ENCODE measurements at regions of chr1 and their contacts with region 1.

Region 1: GRCh38 chr1:226121587-226122400 is 59.3 kb downstream of the H3-3A start:
- DNase-seq: no peak
- ATAC-seq: peak; percentile 79
- H3K4me3 ChIP-seq: peak overlapping the region; percentile 81
- H3K27ac ChIP-seq: peak overlapping the region; percentile 77
- H3K4me1 ChIP-seq: peaks cover 28% of the 10 kb centered on the region
- H3K27me3 ChIP-seq: no peaks in the 10 kb centered on the region
- CTCF ChIP-seq: peak; percentile 64 to 80 (median 72); a peak in 5 of 6 replicates
- EP300 ChIP-seq: no peak
- POLR2A ChIP-seq: peak; percentile 71
- RAD21 ChIP-seq: peak; percentile 90

Region 2: DNA sequence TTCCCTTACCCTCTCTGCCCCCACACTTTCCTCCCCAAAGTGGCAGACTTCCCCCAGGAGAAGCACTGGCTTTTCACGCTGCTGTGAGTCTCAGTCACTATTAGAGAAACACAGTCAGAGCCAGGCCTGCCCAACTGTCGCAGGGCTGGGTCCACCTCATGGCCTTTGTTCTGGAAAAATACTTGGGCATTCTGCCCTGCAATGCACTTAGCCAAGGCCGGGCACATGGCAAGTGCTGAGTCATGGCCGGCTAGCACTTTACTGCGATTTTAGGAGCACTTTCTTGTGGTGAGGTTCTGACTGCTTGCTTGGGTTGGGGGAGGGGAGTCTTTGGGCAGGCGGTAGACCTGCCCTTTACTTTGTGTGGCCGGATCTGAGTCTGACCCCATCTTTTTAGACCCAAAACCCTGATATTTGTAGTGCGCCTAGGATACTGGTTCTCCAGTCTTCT is 304.2 kb before region 1 on chr1:
- CTCF ChIA-PET with region 1: no interaction called
- POLR2A ChIA-PET with region 1: no interaction called
- RAD21 ChIA-PET with region 1: no interaction called
- SMC1A ChIA-PET with region 1: no interaction called
- in situ Hi-C with region 1: no loop called
- intact Hi-C with region 1: no loop called
- DNase-seq: no peak
- ATAC-seq: no peak; the same call in 2 of the 3 replicates
- H3K4me3 ChIP-seq: no peak overlapping the region
- H3K27ac ChIP-seq: no peak overlapping the region
- H3K4me1 ChIP-seq: no peaks in the 10 kb centered on the region
- H3K27me3 ChIP-seq: no peaks in the 10 kb centered on the region
- CTCF ChIP-seq: no peak
- EP300 ChIP-seq: no peak
- POLR2A ChIP-seq: no peak
- RAD21 ChIP-seq: no peak

Region 3: DNA sequence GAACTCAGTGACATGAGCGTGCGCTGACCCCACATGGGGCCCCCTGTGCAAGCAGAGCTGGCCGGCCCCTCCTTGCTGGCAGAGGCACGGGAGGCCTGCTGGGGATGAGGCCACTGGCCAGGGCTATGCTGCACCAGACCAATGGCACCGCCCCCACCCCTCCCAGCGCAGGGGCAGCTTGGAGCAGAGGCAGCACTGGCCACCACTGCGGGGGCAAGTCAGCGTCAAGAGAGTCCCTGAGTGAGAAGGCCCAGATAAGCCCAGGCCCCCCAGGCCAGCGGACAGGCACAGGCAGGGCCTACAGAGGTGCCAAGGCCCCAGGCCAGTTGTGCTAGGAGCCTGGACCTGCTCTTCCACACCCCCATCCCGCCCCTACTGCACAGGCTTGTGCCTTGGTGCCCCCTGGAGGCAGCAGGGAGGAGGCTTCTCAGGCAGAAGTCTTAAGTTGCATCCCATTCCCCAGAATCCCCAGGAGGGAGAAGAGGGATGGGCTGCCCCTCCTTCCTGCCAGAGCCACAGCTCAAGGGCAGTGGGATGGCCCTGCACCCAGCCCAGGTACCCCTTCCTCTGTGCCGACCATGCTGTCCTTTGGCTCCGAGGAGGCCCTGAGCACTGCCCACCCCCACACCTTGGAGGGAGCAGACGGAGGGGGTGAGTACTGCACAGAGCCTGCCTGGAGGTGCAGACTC is 276.1 kb before region 1 on chr1:
- CTCF ChIA-PET with region 1: no interaction called
- POLR2A ChIA-PET with region 1: no interaction called
- RAD21 ChIA-PET with region 1: no interaction called
- SMC1A ChIA-PET with region 1: no interaction called
- in situ Hi-C with region 1: no loop called
- intact Hi-C with region 1: no loop called
- DNase-seq: no peak
- ATAC-seq: peak; percentile 36
- H3K4me3 ChIP-seq: no peak overlapping the region
- H3K27ac ChIP-seq: no peak overlapping the region
- H3K4me1 ChIP-seq: peaks cover 34% of the 10 kb centered on the region
- H3K27me3 ChIP-seq: no peaks in the 10 kb centered on the region
- CTCF ChIP-seq: peak; percentile 43 to 59 (median 47)
- EP300 ChIP-seq: no peak
- POLR2A ChIP-seq: peak; percentile 27
- RAD21 ChIP-seq: peak; percentile 68

Region 4: GRCh38 chr1:225896937-225897549 is 224.8 kb before region 1 on chr1:
- CTCF ChIA-PET with region 1: no interaction called
- POLR2A ChIA-PET with region 1: no interaction called
- RAD21 ChIA-PET with region 1: no interaction called
- SMC1A ChIA-PET with region 1: no interaction called
- in situ Hi-C with region 1: no loop called
- intact Hi-C with region 1: no loop called
- DNase-seq: peak; percentile 90
- ATAC-seq: peak; percentile 100
- H3K4me3 ChIP-seq: no peak overlapping the region
- H3K27ac ChIP-seq: peak overlapping the region; percentile 80
- H3K4me1 ChIP-seq: peaks cover 20% of the 10 kb centered on the region
- H3K27me3 ChIP-seq: no peaks in the 10 kb centered on the region
- CTCF ChIP-seq: peak in 1 of 3 experiments; percentile 11; a peak in 1 of 6 replicates
- EP300 ChIP-seq: peak; percentile 51 to 61; a peak in 3 of 4 replicates
- POLR2A ChIP-seq: peak; percentile 69
- RAD21 ChIP-seq: no peak

Region 5: DNA sequence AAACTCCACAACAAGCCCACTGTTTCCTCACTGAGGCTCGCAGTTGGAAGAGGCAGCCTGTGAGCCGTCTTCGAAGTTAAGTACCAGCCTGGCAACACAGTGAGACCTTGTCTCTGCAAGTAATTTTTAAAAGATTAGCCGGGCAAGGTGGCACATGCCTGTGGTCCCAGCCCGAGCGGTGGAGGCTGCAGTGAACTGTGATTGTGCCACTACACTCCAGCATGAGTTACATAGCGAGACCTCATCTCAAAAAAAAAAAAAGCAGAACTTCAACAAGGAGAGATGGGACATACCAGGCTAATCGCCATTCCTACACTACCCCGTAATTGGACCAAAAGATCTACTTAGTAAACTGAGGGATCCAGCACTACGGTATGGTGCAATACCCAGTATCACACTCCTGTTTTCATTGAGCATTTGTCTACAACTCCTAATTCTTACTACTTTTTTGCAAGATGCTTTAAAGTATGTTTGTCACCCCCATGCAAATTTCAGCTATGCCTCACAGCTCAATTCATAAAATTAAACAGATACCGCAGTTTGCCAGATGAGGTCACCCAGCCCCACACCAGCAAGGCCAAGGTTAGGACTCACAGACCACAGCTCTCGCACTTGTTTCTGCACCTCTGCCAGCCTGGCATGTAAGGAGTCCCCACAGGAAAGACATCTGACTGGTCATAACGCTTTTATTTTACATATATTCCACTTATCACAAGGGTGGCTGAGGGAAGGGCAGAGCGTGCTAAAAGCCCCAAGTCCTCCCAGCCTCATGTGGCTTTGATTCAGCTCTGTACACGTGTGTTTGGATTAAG is 143.7 kb before region 1 on chr1:
- CTCF ChIA-PET with region 1: interaction called, 7 read pairs
- POLR2A ChIA-PET with region 1: no interaction called
- RAD21 ChIA-PET with region 1: interaction called, 6 read pairs
- SMC1A ChIA-PET with region 1: no interaction called
- in situ Hi-C with region 1: no loop called
- intact Hi-C with region 1: loop called (anchors 5 kb)
- DNase-seq: peak; percentile 45
- ATAC-seq: peak; percentile 85
- H3K4me3 ChIP-seq: no peak overlapping the region
- H3K27ac ChIP-seq: no peak overlapping the region
- H3K4me1 ChIP-seq: 0 out of 2 replicates have a peak, but pooled peaks cover 5% of the 10 kb centered on the region
- H3K27me3 ChIP-seq: no peaks in the 10 kb centered on the region
- CTCF ChIP-seq: peak; percentile 9 to 54 (median 11); a peak in 4 of 6 replicates
- EP300 ChIP-seq: no peak
- POLR2A ChIP-seq: no peak
- RAD21 ChIP-seq: peak; percentile 51

Region 6: DNA sequence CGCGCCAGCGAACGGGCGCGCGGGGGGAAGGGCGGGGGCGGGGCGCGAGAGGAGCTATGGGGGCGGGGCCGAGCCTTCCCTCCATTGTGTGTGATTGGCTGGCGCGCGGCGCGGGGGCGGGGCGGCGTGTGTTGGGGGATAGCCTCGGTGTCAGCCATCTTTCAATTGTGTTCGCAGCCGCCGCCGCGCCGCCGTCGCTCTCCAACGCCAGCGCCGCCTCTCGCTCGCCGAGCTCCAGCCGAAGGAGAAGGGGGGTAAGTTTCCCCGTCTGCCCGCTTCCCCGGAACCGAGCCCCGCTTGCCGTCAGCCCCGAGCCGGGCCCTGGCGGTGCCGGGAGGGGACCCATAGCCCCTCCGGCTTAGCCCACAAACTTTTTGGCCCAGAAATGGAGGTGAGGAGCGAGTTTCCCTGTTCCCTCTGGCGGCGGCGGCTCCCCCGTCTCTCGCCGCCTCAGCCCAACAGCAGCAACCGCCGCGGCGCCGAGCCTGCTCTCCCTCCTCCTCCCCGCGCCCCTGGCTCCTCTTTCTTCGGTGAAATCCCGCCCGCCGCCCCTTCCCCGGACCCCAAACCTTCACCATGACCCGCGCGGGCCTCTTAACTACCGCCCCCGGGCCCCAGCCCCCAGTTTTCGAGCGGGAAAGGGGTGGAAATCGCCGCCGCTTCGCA is 59.1 kb before region 1 on chr1 and contains the start of gene H3-3A:
- CTCF ChIA-PET with region 1: interaction called, 198 read pairs
- POLR2A ChIA-PET with region 1: interaction called, 13 read pairs
- RAD21 ChIA-PET with region 1: interaction called, 58 read pairs
- SMC1A ChIA-PET with region 1: interaction called, 65 read pairs
- in situ Hi-C with region 1: no loop called
- intact Hi-C with region 1: loop called (anchors 1 kb)
- DNase-seq: peak; percentile 66
- ATAC-seq: peak; percentile 88
- H3K4me3 ChIP-seq: peak within 1 kb of the TSS; percentile 91
- H3K27ac ChIP-seq: peak within 1 kb of the TSS; percentile 97
- H3K4me1 ChIP-seq: peaks cover 8% of the 10 kb centered on the region
- H3K27me3 ChIP-seq: no peaks in the 10 kb centered on the region
- CTCF ChIP-seq: no peak
- EP300 ChIP-seq: no peak
- POLR2A ChIP-seq: peak; percentile 91
- RAD21 ChIP-seq: no peak
- polyA plus RNA-seq, gene H3-3A: 254 to 435 TPM

Region 7: GRCh38 chr1:226149806-226150205 is 28.0 kb after region 1 on chr1:
- CTCF ChIA-PET with region 1: interaction called, 32 read pairs
- POLR2A ChIA-PET with region 1: no interaction called
- RAD21 ChIA-PET with region 1: interaction called, 13 read pairs
- SMC1A ChIA-PET with region 1: interaction called, 12 read pairs
- in situ Hi-C with region 1: no loop called
- intact Hi-C with region 1: no loop called
- DNase-seq: no peak
- ATAC-seq: peak; percentile 43; the same call in 1 of the 3 replicates
- H3K4me3 ChIP-seq: no peak overlapping the region
- H3K27ac ChIP-seq: no peak overlapping the region
- H3K4me1 ChIP-seq: no peaks in the 10 kb centered on the region
- H3K27me3 ChIP-seq: no peaks in the 10 kb centered on the region
- CTCF ChIP-seq: no peak
- EP300 ChIP-seq: no peak
- POLR2A ChIP-seq: no peak
- RAD21 ChIP-seq: no peak

Region 8: DNA sequence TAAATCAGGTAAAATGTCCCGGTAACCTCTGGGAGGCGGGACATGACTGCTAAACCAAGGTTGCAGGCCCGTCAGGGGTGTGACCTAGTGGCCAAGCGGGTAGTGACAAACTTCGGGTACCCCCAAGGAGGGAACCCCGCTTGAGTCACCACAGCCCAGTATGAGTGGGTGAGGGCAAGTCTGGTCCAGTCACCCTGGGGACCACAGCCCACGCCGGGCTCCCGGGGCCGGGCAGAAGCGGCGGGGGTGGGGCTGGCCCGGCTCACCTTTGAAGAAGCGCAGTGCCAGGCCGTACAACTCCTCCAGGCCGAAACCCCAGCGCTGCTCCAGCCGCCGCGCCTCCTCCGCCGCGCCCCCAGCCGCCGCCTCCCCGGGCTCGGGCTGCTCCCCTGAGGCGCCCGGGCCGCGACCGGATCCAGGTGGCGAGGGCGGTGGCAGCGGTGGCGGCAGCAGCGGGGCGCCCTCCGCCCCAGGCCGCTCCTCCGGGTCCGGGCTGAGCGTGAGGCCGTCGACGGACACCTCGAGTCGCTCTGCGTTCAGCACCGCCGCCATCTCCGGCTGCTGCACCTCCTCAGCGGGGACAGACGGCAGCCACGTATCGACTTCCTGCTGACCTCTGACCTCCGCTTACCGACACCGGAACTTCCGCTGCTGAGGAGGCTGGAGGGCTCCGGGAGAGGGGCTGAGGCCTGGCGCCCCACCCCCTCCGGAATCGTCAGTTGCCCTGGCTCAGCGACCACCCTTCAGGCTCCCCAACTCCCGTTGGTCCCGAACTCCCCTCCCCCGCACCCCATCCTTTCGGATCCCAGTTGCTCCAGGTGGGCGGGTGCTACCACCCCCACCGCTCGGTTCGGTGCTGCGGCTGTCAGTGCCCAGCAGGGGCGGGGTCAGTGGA is 64.6 kb after region 1 on chr1 and contains the start of gene ACBD3:
- CTCF ChIA-PET with region 1: interaction called, 505 read pairs
- POLR2A ChIA-PET with region 1: interaction called, 22 read pairs
- RAD21 ChIA-PET with region 1: interaction called, 81 read pairs
- SMC1A ChIA-PET with region 1: interaction called, 125 read pairs
- in situ Hi-C with region 1: no loop called
- intact Hi-C with region 1: loop called (anchors 2 kb)
- DNase-seq: peak; percentile 41
- ATAC-seq: peak; percentile 92
- H3K4me3 ChIP-seq: peak within 1 kb of the TSS; percentile 94
- H3K27ac ChIP-seq: peak within 1 kb of the TSS; percentile 88
- H3K4me1 ChIP-seq: peaks cover 7% of the 10 kb centered on the region; the same call in 1 of the 2 replicates
- H3K27me3 ChIP-seq: no peaks in the 10 kb centered on the region
- CTCF ChIP-seq: no peak; a peak in 1 of 6 replicates
- EP300 ChIP-seq: no peak
- POLR2A ChIP-seq: peak; percentile 100
- RAD21 ChIP-seq: no peak
- polyA plus RNA-seq, gene ACBD3: 7.5 to 8.9 TPM

Region 9: DNA sequence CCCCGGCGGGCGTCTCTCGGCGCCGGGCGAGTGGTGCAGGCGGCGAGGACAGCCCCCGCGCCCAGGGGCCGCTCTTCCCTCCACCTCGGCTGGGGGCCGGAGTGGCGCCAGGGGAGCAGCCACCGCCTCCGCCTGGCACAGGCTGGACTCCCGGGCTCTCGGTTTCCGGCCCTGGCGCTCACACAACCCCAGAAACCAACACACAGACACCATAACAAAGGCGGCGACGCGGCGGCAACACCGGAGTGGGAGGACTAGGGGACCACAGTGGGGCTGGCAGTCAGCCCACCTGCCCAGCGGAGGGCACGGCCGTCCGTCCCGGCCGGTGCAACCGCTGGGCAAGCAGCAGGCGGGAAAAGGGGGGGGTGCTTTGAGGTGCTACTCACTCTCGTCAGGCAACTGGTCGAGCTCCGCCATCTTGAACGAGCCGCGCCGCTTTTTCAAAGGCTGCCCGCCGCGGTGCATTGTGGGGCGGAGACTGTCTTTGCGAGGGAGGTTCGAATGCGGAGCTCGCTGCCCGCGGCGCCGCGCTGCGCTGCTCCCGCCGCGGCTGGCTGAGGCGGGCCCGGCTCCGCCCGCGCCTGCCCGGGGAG is 187.0 kb after region 1 on chr1 and contains the start of gene LIN9:
- CTCF ChIA-PET with region 1: interaction called, 22 read pairs
- POLR2A ChIA-PET with region 1: interaction called, 3 read pairs
- RAD21 ChIA-PET with region 1: interaction called, 6 read pairs
- SMC1A ChIA-PET with region 1: interaction called, 6 read pairs
- in situ Hi-C with region 1: no loop called
- intact Hi-C with region 1: loop called (anchors 10 kb)
- DNase-seq: peak; percentile 46
- ATAC-seq: peak; percentile 84
- H3K4me3 ChIP-seq: peak within 1 kb of the TSS; percentile 98
- H3K27ac ChIP-seq: peak within 1 kb of the TSS; percentile 92
- H3K4me1 ChIP-seq: peaks cover 3% of the 10 kb centered on the region; the same call in 1 of the 2 replicates
- H3K27me3 ChIP-seq: no peaks in the 10 kb centered on the region
- CTCF ChIP-seq: no peak
- EP300 ChIP-seq: no peak
- POLR2A ChIP-seq: peak; percentile 92
- RAD21 ChIP-seq: no peak
- polyA plus RNA-seq, gene LIN9: 5.9 to 6.5 TPM

Region 10: DNA sequence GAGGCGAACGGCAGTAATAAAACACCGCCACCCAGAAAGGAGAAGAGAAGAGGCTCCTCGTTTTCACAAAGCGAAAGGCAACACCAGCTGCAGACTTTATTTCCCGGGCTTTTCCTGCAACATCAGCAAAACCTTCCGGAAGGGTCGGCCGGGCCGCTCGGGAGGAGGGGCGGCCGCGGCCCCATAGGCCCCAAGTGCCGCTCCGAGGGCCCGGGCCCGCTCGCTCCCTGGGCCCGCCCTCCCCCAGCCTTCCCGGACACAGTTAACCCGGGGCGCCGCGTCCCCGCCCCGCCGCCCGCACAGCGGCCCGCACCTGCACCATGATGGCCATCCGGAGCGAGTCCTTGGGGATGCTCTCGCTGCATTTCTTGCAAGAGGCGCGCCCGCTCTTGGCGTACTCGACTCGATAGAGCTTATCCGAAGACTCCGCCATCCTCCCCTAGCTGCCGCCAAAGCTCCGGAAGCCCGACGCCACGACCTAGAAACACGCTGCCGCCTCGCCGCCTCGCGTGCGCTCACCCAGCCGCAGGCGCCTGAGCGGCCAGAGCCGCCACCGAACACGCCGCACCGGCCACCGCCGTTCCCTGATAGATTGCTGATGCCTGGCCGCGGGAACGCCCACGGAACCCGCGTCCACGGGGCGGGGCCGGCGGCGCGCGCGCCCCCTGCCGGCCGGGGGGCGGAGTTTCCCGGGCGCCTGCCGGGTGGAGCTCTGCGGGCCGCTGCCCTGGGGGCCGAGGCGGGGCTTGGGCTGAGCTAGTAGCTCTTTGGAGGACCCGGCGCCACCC is 285.9 kb after region 1 on chr1 and contains the start of gene PARP1:
- CTCF ChIA-PET with region 1: interaction called, 60 read pairs
- POLR2A ChIA-PET with region 1: interaction called, 6 read pairs
- RAD21 ChIA-PET with region 1: interaction called, 19 read pairs
- SMC1A ChIA-PET with region 1: interaction called, 32 read pairs
- in situ Hi-C with region 1: no loop called
- intact Hi-C with region 1: loop called (anchors 5 kb)
- DNase-seq: no peak
- ATAC-seq: peak; percentile 85
- H3K4me3 ChIP-seq: peak within 1 kb of the TSS; percentile 86
- H3K27ac ChIP-seq: peak within 1 kb of the TSS; percentile 77
- H3K4me1 ChIP-seq: peaks cover 22% of the 10 kb centered on the region
- H3K27me3 ChIP-seq: no peaks in the 10 kb centered on the region
- CTCF ChIP-seq: peak; percentile 33 to 83 (median 71); a peak in 5 of 6 replicates
- EP300 ChIP-seq: no peak; a peak in 1 of 4 replicates
- POLR2A ChIP-seq: peak; percentile 86
- RAD21 ChIP-seq: no peak
- polyA plus RNA-seq, gene PARP1: 113 to 170 TPM

Region 11: DNA sequence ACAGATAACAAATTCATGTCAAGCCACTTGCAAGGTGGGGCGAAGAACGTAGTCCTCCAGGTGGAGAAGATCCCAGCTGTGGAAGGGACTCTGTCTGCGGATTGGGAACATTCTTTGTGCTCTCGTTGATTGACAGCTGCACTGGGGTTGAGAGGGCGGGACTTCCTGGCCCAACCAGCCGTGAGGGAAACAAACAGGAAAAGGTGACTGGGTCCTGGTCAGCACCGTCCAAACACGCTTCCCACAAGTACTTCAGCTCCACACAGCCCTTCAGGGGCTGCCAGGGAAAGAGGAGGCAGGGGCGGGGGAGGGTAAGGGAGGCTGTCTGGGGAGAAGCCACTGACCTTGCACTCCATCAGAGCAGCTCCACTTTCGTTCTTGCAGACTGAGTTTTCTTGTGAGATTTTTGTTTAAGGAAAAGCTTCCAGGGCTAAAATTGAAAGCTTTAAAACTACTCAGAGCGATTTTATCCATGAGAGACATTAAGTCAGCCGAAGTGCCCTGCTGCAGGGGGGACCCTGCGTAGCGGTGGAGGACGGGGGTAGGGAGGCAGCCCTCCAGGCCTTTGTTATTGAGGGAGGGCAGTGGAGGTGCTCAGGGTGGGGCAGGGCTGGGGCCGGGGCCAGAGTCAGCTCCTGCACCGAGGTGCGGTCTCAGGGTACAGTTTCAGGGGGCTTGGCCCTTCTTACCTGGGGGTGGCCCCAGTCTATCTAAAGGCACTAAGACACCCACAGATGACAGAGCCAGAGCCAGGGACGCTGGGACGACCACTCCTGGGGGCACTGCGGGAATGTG is 405.2 kb after region 1 on chr1:
- CTCF ChIA-PET with region 1: no interaction called
- POLR2A ChIA-PET with region 1: no interaction called
- RAD21 ChIA-PET with region 1: no interaction called
- SMC1A ChIA-PET with region 1: no interaction called
- in situ Hi-C with region 1: no loop called
- intact Hi-C with region 1: no loop called
- DNase-seq: no peak
- ATAC-seq: peak; percentile 27; the same call in 1 of the 3 replicates
- H3K4me3 ChIP-seq: no peak overlapping the region
- H3K27ac ChIP-seq: no peak overlapping the region
- H3K4me1 ChIP-seq: no peaks in the 10 kb centered on the region
- H3K27me3 ChIP-seq: peaks cover 2 to 3% of the 10 kb centered on the region in 2 experiments; a peak in 2 of 4 replicates
- CTCF ChIP-seq: no peak
- EP300 ChIP-seq: no peak
- POLR2A ChIP-seq: no peak
- RAD21 ChIP-seq: no peak